MCF 10A (cell line): ENCODE measurements at regions of chr4 and their contacts with region 1.

Region 1: GRCh38 chr4:165974647-165975335 is 101.8 kb downstream of the TLL1 start:
- DNase-seq: no peak
- H3K4me3 Mint-ChIP-seq: no peak overlapping the region
- H3K27ac Mint-ChIP-seq: no peak overlapping the region
- H3K4me1 Mint-ChIP-seq: peaks cover 27% of the 10 kb centered on the region
- H3K27me3 Mint-ChIP-seq: no peaks in the 10 kb centered on the region
- CTCF ChIP-seq: no peak

Region 2: GRCh38 chr4:166003811-166004210 is 29.0 kb after region 1 on chr4:
- CTCF ChIA-PET with region 1: no interaction called
- POLR2A ChIA-PET with region 1: interaction called, 11 read pairs
- intact Hi-C with region 1: no loop called
- DNase-seq: peak; percentile 35
- H3K4me3 Mint-ChIP-seq: no peak overlapping the region
- H3K27ac Mint-ChIP-seq: no peak overlapping the region
- H3K4me1 Mint-ChIP-seq: no peaks in the 10 kb centered on the region
- H3K27me3 Mint-ChIP-seq: no peaks in the 10 kb centered on the region
- CTCF ChIP-seq: no peak

Region 3: GRCh38 chr4:166012129-166013078 is 37.6 kb after region 1 on chr4:
- CTCF ChIA-PET with region 1: interaction called, 3 read pairs
- POLR2A ChIA-PET with region 1: interaction called, 14 read pairs
- intact Hi-C with region 1: no loop called
- DNase-seq: no peak
- H3K4me3 Mint-ChIP-seq: no peak overlapping the region
- H3K27ac Mint-ChIP-seq: peak overlapping the region; percentile 78
- H3K4me1 Mint-ChIP-seq: peaks cover 23% of the 10 kb centered on the region
- H3K27me3 Mint-ChIP-seq: no peaks in the 10 kb centered on the region
- CTCF ChIP-seq: no peak